ENCODE measurements at regions of chr22 and their contacts with region 1.

Region 1: GRCh38 chr22:45645526-45646414 is 25.9 kb upstream of the ATXN10 start:
- DNase-seq: peak; percentile 77 to 86
- ATAC-seq: peak; percentile 92 to 99 (median 96)
- H3K4me3 ChIP-seq: no peak overlapping the region
- H3K27ac ChIP-seq: no peak overlapping the region
- H3K4me1 ChIP-seq: no peaks in the 10 kb centered on the region
- H3K27me3 ChIP-seq: peaks cover 0 to 29% (median 0%) of the 10 kb centered on the region in 3 donors
- CTCF ChIP-seq: peak; percentile 98

Region 2: GRCh38 chr22:45577746-45578523 is 67.8 kb before region 1 on chr22:
- intact Hi-C with region 1: loop called in 1 of 2 experiments (anchors 1 kb)
- DNase-seq: peak; percentile 81 to 91
- ATAC-seq: peak; percentile 86 to 92 (median 88)
- H3K4me3 ChIP-seq: no peak overlapping the region
- H3K27ac ChIP-seq: no peak overlapping the region
- H3K4me1 ChIP-seq: no peaks in the 10 kb centered on the region
- H3K27me3 ChIP-seq: peaks cover 0 to 6% (median 0%) of the 10 kb centered on the region in 3 donors
- CTCF ChIP-seq: peak; percentile 92

Region 3: DNA sequence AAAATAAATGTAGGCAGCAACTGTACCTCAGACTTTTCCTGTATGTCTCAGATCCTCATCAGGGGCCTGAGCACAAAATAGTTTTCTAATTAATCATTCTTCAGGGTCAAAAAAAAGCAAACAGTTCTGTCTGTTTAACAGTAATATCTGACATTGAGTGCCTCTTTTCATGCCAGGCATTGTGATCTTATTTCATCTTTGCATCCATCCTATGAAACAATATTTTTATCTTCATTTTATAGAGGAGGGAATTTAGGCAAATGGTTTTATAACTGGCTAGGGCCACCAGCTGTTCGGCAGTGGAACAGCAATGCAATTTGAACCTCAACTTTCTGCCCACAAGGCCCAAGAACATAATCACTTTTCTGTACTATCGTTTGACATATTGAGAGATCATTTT is 185.6 kb after region 1 on chr22:
- intact Hi-C with region 1: loop called (anchors 10 kb)
- DNase-seq: no peak
- ATAC-seq: peak in 1 of 4 donors; percentile 27
- H3K4me3 ChIP-seq: no peak overlapping the region
- H3K27ac ChIP-seq: no peak overlapping the region
- H3K4me1 ChIP-seq: no peaks in the 10 kb centered on the region
- H3K27me3 ChIP-seq: no peaks in the 10 kb centered on the region
- CTCF ChIP-seq: peak; percentile 13

Region 4: DNA sequence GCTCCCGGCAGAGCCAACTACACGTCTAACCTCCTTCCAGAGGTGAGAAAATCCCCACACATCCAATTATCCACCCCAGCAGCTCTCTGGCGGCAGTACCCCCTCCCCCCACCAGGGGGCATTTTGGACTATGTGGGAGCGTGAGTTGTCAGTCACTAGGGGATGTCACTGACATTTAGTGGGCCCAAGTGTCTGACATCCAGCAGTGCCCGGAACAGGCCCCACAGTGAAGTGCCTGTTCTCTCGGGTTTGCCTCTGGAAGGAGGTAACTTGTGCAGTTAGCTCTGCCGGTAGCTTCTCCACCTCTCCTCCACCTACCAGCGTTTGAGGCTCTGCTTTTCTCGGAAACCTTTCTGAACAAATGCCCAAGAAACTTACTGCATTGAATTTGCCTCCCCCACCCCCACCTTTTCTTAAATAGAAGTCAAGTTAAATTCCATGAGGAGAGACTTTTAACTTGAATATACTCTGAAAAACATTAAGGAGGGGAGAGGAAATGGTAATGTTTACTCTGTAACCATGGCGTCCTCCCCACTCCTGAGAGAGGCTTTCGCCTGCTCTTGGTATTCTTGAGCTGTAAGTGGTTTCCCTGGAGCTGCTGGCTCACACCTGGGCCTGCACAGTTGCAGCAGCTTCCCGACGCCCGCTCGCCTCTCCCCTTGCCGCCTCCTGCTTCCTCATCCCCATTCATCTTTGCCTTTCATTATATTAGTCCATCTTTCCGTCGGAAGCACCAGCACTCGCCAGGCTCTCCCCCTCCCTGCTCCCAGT is 218.4 kb after region 1 on chr22:
- intact Hi-C with region 1: loop called (anchors 5 kb)
- DNase-seq: peak; percentile 72 to 79
- ATAC-seq: peak; percentile 53 to 72 (median 62)
- H3K4me3 ChIP-seq: no peak overlapping the region
- H3K27ac ChIP-seq: no peak overlapping the region
- H3K4me1 ChIP-seq: peaks cover 8% of the 10 kb centered on the region
- H3K27me3 ChIP-seq: peaks cover 0 to 43% (median 15%) of the 10 kb centered on the region in 3 donors
- CTCF ChIP-seq: peak; percentile 92

Measured in psoas muscle (tissue), 8 donors.